ENCODE measurements at regions of chr19 and their contacts with region 1.

Region 1: DNA sequence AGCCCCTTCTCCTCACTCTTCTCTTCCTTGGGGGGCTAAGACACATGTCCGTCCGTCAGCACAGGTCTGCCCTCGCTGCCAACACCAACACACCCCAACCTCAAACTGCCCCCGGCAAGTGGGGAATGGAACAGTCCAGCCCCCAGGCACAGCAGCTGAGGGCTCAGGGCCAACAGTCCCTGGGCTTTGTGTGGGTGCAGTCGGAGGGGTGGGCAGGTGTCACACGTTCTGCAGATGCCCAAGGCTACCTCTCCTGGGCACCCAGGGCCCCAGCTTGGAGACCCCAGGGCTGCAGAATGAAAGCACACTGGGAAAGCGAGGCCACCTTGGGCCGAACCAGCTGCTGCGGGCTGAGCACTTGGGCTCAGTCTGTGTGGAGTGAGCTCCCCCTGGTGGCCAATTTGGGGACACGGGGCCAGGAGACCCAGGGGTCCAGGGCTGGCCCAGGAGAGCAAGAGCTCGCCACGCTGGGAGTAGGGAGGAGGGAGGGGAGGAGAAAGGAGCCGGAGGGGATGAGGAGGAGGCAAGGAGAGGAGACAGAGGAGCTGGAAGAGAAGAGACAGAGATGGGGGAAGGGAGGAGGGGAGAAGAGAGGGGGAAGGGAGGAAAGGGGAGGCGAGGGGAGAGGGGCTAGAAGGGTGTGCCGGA is 14.0 kb upstream of the ATP8B3 start:
- H3K4me3 ChIP-seq: no peak overlapping the region
- H3K27ac ChIP-seq: no peak overlapping the region
- H3K4me1 ChIP-seq: no peaks in the 10 kb centered on the region
- CTCF ChIP-seq: peak; percentile 97

Region 2: GRCh38 chr19:1672038-1672768 is 153.8 kb before region 1 on chr19:
- CTCF ChIA-PET with region 1: interaction called, 28 read pairs
- POLR2A ChIA-PET with region 1: interaction called, 3 read pairs
- H3K4me3 ChIP-seq: no peak overlapping the region; the same call in 1 of the 2 replicates
- H3K27ac ChIP-seq: no peak overlapping the region
- H3K4me1 ChIP-seq: no peaks in the 10 kb centered on the region; the same call in 1 of the 2 replicates
- CTCF ChIP-seq: peak; percentile 92

Region 3: GRCh38 chr19:1773173-1773572 is 52.9 kb before region 1 on chr19:
- CTCF ChIA-PET with region 1: interaction called, 21 read pairs
- POLR2A ChIA-PET with region 1: no interaction called
- H3K4me3 ChIP-seq: no peak overlapping the region
- H3K27ac ChIP-seq: no peak overlapping the region
- H3K4me1 ChIP-seq: no peaks in the 10 kb centered on the region; the same call in 1 of the 2 replicates
- CTCF ChIP-seq: no peak

Region 4: GRCh38 chr19:1794424-1795172 is 31.4 kb before region 1 on chr19:
- CTCF ChIA-PET with region 1: interaction called, 21 read pairs
- POLR2A ChIA-PET with region 1: no interaction called
- H3K4me3 ChIP-seq: no peak overlapping the region
- H3K27ac ChIP-seq: no peak overlapping the region
- H3K4me1 ChIP-seq: no peaks in the 10 kb centered on the region
- CTCF ChIP-seq: no peak

Region 5: GRCh38 chr19:1837625-1838105 is 11.6 kb after region 1 on chr19:
- CTCF ChIA-PET with region 1: interaction called, 53 read pairs
- POLR2A ChIA-PET with region 1: interaction called, 5 read pairs
- H3K4me3 ChIP-seq: no peak overlapping the region
- H3K27ac ChIP-seq: no peak overlapping the region
- H3K4me1 ChIP-seq: no peaks in the 10 kb centered on the region
- CTCF ChIP-seq: peak; percentile 80

Measured in HEK293 (cell line).